CD8-positive, alpha-beta T cell (primary cell): ENCODE measurements at regions of chr6 and their contacts with region 1.

Region 1: DNA sequence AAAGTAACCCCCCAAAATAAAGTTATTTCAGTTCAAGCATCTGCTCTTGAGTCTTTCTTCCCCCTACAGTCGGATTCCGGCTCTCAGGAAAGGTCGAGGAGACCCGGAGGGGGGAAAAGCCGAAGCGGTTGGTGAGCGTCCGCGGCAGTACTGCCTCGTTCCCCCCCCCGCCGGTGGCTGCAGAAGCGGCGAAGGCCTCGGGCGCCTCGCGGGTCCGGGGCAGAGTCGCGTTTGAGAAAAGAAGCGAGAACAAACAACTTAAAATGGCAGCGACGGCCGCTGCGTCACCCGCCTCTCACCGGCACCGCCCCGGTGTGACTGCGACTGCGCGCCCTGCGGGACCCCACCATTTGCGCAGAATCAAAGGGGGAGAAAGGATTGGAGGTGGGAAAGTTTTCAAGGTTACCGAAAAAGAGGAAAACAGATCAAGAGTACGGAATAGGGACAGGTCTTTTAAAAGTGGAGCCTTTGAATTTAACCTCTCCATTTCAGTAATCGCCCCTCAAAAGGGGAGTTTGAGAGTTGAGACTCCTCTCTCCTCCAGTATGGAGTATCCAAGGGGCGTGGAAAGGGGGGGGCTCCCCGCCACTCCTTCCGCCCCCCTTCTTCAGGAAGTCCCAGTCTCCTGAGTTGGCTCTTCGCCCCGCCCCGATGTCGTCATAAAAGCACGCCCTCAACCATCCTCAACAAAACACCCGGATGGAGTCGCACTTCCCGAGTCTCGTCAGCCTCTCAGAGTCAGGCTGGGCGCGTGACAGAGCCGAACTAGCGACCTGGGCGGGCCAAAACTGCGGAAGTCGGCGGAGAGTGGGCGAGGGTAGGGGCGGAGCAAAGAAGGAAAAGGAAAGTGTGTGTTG is 1.9 kb upstream of the C6orf62 start:
- DNase-seq: peak; percentile 100
- ATAC-seq: peak; percentile 80
- H3K4me3 ChIP-seq: peak overlapping the region; percentile 88 to 99
- H3K4me3 Mint-ChIP-seq: peak overlapping the region; percentile 92
- H3K27ac ChIP-seq: peak overlapping the region; percentile 97 to 100
- H3K27ac Mint-ChIP-seq: peak overlapping the region; percentile 98
- H3K4me1 ChIP-seq: peaks cover 37% of the 10 kb centered on the region
- H3K4me1 Mint-ChIP-seq: peaks cover 41% of the 10 kb centered on the region
- H3K27me3 ChIP-seq: no peaks in the 10 kb centered on the region
- H3K27me3 Mint-ChIP-seq: no peaks in the 10 kb centered on the region
- CTCF ChIP-seq: no peak

Region 2: GRCh38 chr6:24646782-24647181 is 74.0 kb before region 1 on chr6:
- CTCF ChIA-PET with region 1: no interaction called
- POLR2A ChIA-PET with region 1: interaction called, 3 read pairs
- intact Hi-C with region 1: loop called in 1 of 2 experiments (anchors 1 kb)
- DNase-seq: no peak
- ATAC-seq: no peak
- H3K4me3 ChIP-seq: no peak overlapping the region
- H3K4me3 Mint-ChIP-seq: peak overlapping the region; percentile 81
- H3K27ac ChIP-seq: no peak overlapping the region
- H3K27ac Mint-ChIP-seq: no peak overlapping the region
- H3K4me1 ChIP-seq: peaks cover 9% of the 10 kb centered on the region
- H3K4me1 Mint-ChIP-seq: peaks cover 12% of the 10 kb centered on the region
- H3K27me3 ChIP-seq: peaks cover 0 to 4% of the 10 kb centered on the region in 2 experiments
- H3K27me3 Mint-ChIP-seq: peaks cover 18% of the 10 kb centered on the region
- CTCF ChIP-seq: no peak

Region 3: DNA sequence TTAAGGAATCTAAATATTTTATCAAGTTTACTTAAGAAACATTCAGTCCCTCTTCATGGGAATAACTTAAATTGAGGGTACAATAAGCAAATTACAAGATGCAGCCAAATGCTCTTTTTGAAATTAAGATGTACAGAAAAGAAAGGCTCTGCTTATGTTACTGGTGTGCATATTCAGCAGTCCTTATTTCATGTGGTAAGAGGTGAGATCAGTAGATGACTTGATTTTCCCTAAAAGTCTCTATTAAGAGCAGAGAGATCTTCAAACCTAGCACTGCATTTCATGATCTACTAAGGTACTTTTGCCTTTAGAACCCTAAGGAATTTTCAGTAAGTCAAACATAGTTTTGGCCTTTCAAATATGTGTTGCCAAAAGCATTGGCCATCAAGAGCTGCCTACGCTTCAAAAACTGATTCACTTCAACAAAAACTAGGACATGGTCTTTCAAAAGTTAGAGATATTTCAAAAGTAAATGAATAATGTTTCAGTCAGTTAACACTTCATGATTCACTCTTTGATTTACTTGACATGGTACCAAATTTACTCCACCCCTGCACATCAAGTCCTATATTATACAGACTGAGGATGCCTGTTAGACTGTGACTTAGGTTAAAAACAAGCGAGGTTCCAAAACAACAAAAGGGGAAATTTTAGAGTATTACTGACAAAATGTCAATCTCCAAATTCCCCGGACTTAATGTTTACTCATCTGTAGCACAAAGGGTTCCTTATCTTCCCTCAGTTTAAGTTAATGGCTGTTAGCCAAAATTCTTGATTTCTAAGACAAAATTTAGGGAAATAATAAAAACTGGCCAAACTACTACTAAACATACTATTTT is 21.1 kb before region 1 on chr6:
- CTCF ChIA-PET with region 1: interaction called, 4 read pairs
- POLR2A ChIA-PET with region 1: interaction called, 19 read pairs
- intact Hi-C with region 1: loop called in 1 of 2 experiments (anchors 2 kb)
- DNase-seq: no peak
- ATAC-seq: no peak
- H3K4me3 ChIP-seq: no peak overlapping the region
- H3K4me3 Mint-ChIP-seq: no peak overlapping the region
- H3K27ac ChIP-seq: peak overlapping the region in 1 of 2 experiments; percentile 0
- H3K27ac Mint-ChIP-seq: peak overlapping the region; percentile 71
- H3K4me1 ChIP-seq: no peaks in the 10 kb centered on the region
- H3K4me1 Mint-ChIP-seq: peaks cover 24% of the 10 kb centered on the region
- H3K27me3 ChIP-seq: no peaks in the 10 kb centered on the region
- H3K27me3 Mint-ChIP-seq: no peaks in the 10 kb centered on the region
- CTCF ChIP-seq: no peak

Region 4: DNA sequence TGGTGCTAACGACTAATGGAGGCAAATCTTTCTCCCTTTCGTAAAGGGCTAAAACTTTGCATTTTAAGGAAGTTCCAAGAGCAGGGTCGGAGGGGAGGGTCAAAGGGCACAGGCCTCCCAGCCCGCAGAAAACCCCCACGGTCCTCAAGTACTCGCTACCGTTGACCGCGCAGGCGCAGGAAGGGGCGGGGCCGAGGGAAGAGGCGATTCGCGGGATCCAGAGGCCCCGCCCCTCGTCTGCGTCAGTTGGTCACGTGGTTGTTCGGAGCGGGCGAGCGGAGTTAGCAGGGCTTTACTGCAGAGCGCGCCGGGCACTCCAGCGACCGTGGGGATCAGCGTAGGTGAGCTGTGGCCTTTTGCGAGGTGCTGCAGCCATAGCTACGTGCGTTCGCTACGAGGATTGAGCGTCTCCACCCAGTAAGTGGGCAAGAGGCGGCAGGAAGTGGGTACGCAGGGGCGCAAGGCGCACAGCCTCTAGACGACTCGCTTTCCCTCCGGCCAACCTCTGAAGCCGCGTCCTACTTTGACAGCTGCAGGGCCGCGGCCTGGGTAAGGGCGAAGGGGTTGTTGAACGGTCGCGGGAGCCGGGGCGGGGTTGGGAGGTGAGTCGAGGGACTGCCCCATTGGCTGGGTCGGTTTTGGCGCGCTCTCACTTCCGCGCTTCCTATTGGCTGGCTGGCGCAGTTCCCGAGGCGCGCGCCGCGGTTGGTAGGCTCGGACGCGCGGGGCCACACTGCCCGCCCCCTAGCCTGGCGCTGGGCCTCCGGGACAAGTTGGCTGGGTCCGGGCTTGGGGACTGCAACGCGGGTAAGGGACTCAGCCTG is 54.1 kb after region 1 on chr6 and contains the start of gene GMNN:
- CTCF ChIA-PET with region 1: no interaction called
- POLR2A ChIA-PET with region 1: interaction called, 9 read pairs
- intact Hi-C with region 1: loop called (anchors 1 kb)
- DNase-seq: peak; percentile 93 to 99 (median 98)
- ATAC-seq: peak; percentile 86
- H3K4me3 ChIP-seq: peak within 1 kb of the TSS; percentile 86 to 94
- H3K4me3 Mint-ChIP-seq: peak within 1 kb of the TSS; percentile 99
- H3K27ac ChIP-seq: peak within 1 kb of the TSS; percentile 83 to 85
- H3K27ac Mint-ChIP-seq: peak within 1 kb of the TSS; percentile 97
- H3K4me1 ChIP-seq: peaks cover 14% of the 10 kb centered on the region
- H3K4me1 Mint-ChIP-seq: peaks cover 22% of the 10 kb centered on the region
- H3K27me3 ChIP-seq: no peaks in the 10 kb centered on the region
- H3K27me3 Mint-ChIP-seq: no peaks in the 10 kb centered on the region
- CTCF ChIP-seq: no peak
- total RNA-seq, gene GMNN: 14.1 to 14.4 TPM

Region 5: GRCh38 chr6:25138237-25139125 is 417.6 kb after region 1 on chr6:
- CTCF ChIA-PET with region 1: no interaction called
- POLR2A ChIA-PET with region 1: no interaction called
- intact Hi-C with region 1: loop called in 1 of 2 experiments (anchors 5 kb)
- DNase-seq: peak; percentile 8 to 88 (median 63)
- ATAC-seq: peak; percentile 90
- H3K4me3 ChIP-seq: peak overlapping the region; percentile 58 to 72
- H3K4me3 Mint-ChIP-seq: peak overlapping the region; percentile 89
- H3K27ac ChIP-seq: peak overlapping the region; percentile 70 to 85
- H3K27ac Mint-ChIP-seq: peak overlapping the region; percentile 93
- H3K4me1 ChIP-seq: peaks cover 25% of the 10 kb centered on the region
- H3K4me1 Mint-ChIP-seq: peaks cover 39% of the 10 kb centered on the region
- H3K27me3 ChIP-seq: no peaks in the 10 kb centered on the region
- H3K27me3 Mint-ChIP-seq: no peaks in the 10 kb centered on the region
- CTCF ChIP-seq: no peak